Right ventricle myocardium inferior (tissue), 1 donor: ENCODE measurements at regions of chr17 and their contacts with region 1.

Region 1: DNA sequence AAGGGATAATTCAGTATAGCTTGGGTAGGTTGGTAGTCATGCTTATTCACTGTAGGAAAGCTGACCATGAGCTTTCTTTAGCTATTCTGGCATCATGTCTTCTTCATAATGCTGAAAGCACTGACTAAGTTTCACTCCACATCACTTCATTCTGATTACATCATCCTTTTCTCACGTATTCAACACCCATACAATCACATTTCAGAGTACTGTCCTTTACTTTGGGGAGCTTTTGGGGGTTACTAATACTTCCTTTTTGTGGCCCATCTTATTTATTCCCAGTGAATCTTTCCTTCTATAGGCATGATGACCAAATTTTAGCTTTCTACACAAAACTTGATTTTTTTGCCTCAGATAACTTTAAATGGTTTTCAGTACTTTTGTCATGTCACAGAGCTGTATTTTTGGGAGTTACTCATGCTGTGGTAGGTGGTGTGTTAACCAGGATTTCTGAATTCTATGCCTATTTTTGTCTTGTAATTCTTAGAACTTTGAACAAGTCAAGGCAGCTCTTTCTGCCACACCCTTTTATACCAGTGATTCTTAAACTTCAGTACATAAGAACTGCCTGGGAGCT is 23.5 kb downstream of the TADA2A start:
- DNase-seq: no peak
- ATAC-seq: no peak

Region 2: GRCh38 chr17:37458805-37459204 is 28.7 kb after region 1 on chr17:
- intact Hi-C with region 1: no loop called
- DNase-seq: no peak
- ATAC-seq: no peak

Region 3: GRCh38 chr17:37476431-37477120 is 46.4 kb after region 1 on chr17:
- intact Hi-C with region 1: no loop called
- DNase-seq: no peak
- ATAC-seq: peak; percentile 82

Region 4: DNA sequence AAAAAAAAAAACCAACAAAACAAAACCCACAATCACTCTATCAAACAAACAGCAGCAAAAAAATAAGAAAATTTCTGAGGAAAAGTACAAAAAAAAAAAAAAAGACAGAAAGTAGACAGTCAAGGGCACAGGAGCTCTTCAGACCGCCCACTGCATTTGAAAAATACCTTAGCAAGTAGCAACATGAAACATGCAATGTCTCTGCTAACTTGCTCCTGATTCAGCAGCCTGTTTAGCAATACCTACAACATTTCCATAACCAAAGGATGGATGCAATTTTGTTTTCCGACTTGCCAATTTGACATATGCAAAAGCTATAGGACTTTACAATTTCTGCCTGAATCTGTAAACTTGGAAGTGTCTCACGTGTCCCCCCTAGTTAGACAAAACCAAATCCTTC is 121.6 kb after region 1 on chr17:
- intact Hi-C with region 1: loop called (anchors 10 kb)
- DNase-seq: no peak
- ATAC-seq: no peak

Region 5: GRCh38 chr17:37844158-37844976 is 414.2 kb after region 1 on chr17:
- intact Hi-C with region 1: no loop called
- DNase-seq: peak; percentile 74
- ATAC-seq: peak; percentile 74